Aorta (tissue), 5 donors: ENCODE measurements at regions of chr12 and their contacts with region 1.

Region 1: GRCh38 chr12:22083167-22083566 is 37.1 kb downstream of the CMAS start:
- DNase-seq: no peak
- ATAC-seq: no peak
- H3K4me3 ChIP-seq: no peak overlapping the region
- H3K27ac ChIP-seq: no peak overlapping the region
- H3K4me1 ChIP-seq: no peaks in the 10 kb centered on the region
- H3K27me3 ChIP-seq: no peaks in the 10 kb centered on the region

Region 2: DNA sequence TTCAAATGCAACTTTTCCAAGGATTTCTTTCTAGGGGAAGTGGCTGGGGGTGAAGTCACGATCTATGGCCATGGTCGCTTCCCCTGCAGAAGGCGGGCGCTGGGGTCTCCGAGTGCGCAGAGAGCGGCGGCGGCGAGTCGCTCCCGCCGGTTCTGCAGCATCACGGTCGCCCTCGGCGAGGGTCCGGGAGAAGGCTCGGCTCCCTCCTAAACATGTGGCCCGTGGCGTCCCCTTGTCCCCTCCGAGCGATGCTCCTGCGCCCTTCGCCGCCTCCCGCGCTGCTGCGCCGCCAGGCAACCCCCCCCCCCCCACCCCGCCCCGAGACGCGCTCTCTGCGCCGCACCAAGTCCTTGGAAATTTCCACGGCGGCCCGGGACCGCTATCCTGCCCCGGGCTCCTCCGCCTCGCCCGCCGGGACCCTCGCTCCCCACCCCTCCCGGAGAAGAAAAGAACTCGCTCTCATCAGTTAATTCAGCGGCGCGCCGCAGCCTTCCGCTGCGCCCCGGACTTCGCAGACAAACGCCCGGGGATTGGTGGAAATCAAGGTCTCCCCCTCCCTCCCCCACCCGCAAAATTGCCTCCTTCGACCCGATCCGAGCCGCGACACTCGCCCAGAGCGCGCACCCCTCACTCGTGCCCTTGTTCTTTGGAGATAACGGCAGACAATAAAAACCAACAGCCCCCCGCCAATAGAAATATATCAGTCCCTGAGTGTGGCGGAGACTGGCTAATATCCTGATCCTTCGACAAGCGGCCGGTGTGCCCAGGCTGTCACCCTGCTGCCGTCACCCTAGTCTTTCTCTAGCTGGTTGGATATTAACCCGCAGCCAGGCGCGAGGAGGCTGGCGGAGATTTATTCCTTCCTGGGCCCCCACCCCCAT is 251.5 kb after region 1 on chr12 and contains the start of gene ST8SIA1:
- intact Hi-C with region 1: loop called in 1 of 2 experiments (anchors 5 kb)
- DNase-seq: peak; percentile 53 to 79
- ATAC-seq: peak; percentile 57
- H3K4me3 ChIP-seq: peak within 1 kb of the TSS; percentile 5 to 47
- H3K27ac ChIP-seq: no peak within 1 kb of the TSS
- H3K4me1 ChIP-seq: no peaks in the 10 kb centered on the region
- H3K27me3 ChIP-seq: no peaks in the 10 kb centered on the region
- total RNA-seq, gene ST8SIA1: 3.6 to 9.0 TPM

Region 3: GRCh38 chr12:22443379-22444316 is 360.5 kb after region 1 on chr12:
- intact Hi-C with region 1: loop called (anchors 5 to 10 kb)
- DNase-seq: peak; percentile 51 to 55
- ATAC-seq: peak; percentile 89
- H3K4me3 ChIP-seq: no peak overlapping the region
- H3K27ac ChIP-seq: no peak overlapping the region
- H3K4me1 ChIP-seq: no peaks in the 10 kb centered on the region
- H3K27me3 ChIP-seq: no peaks in the 10 kb centered on the region

Region 4: GRCh38 chr12:22562036-22563028 is 479.2 kb after region 1 on chr12:
- intact Hi-C with region 1: no loop called
- DNase-seq: no peak
- ATAC-seq: no peak
- H3K4me3 ChIP-seq: no peak overlapping the region
- H3K27ac ChIP-seq: no peak overlapping the region
- H3K4me1 ChIP-seq: no peaks in the 10 kb centered on the region
- H3K27me3 ChIP-seq: no peaks in the 10 kb centered on the region